Motor neuron (in vitro differentiated cells): ENCODE measurements at regions of chr7 and their contacts with region 1.

Region 1: GRCh38 chr7:27160546-27161213 is 4.2 kb upstream of the HOXA7 start:
- ATAC-seq: peak; percentile 18 to 77 (median 64)
- H3K4me3 ChIP-seq: peak overlapping the region; percentile 34 to 55 (median 41)
- H3K27ac ChIP-seq: no peak overlapping the region
- H3K4me1 ChIP-seq: peaks cover 7% of the 10 kb centered on the region in 2 donors

Region 2: DNA sequence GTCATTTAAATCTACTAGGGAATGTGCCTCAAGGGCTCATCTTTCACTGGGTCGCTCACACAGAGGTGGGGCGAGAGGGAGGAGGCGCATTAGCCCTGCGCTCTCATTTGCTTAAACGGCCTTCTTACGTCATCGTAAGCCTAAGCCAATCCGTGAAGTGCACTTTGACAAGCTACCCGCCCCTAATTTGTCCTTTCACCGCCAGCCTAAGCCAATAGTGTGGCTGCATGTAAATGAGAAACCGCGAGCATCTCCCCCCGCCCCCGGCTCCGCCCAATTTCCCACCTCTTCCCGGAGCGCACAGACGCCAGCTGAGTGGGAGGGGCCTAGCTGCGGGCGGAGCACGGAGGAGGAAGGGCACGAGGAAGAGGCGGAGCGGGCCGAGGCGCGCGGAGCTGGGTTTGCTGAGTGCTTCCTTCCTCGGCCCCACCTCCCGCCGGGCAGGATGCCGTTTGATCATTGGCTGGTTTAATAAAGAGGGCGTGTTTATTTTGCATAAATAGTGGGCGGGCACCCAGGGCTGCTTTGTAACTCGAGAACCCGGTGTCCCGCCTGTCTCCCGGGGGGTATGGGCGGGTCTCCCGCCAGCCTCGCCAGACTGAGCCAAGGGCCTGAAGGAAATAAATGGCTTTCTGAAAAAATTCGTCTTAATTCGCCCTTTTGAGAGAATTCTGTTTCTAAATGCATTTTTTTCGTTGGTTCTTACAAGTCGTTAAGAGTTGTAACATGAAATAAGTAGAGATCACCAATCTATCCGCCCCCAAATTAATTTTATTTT is 1298.2 kb before region 1 on chr7:
- in situ Hi-C with region 1: loop called in 1 of 9 experiments (anchors 25 kb)
- ATAC-seq: peak; percentile 86 to 93 (median 92)
- H3K4me3 ChIP-seq: peak overlapping the region; percentile 7 to 25 (median 14)
- H3K27ac ChIP-seq: no peak overlapping the region
- H3K4me1 ChIP-seq: peaks cover 0 to 2% of the 10 kb centered on the region in 2 donors

Region 3: GRCh38 chr7:26398756-26399501 is 761.8 kb before region 1 on chr7:
- in situ Hi-C with region 1: loop called in 1 of 9 experiments (anchors 25 kb)
- ATAC-seq: peak; percentile 36 to 70 (median 46)
- H3K4me3 ChIP-seq: peak overlapping the region; percentile 38 to 53 (median 48)
- H3K27ac ChIP-seq: peak overlapping the region; percentile 92 to 98
- H3K4me1 ChIP-seq: peaks cover 19 to 37% of the 10 kb centered on the region in 2 donors

Region 4: GRCh38 chr7:26699766-26700165 is 460.9 kb before region 1 on chr7:
- in situ Hi-C with region 1: loop called in 1 of 9 experiments (anchors 5 kb)
- ATAC-seq: no peak
- H3K4me3 ChIP-seq: no peak overlapping the region
- H3K27ac ChIP-seq: no peak overlapping the region
- H3K4me1 ChIP-seq: peaks cover 8 to 24% of the 10 kb centered on the region in 2 donors

Region 5: DNA sequence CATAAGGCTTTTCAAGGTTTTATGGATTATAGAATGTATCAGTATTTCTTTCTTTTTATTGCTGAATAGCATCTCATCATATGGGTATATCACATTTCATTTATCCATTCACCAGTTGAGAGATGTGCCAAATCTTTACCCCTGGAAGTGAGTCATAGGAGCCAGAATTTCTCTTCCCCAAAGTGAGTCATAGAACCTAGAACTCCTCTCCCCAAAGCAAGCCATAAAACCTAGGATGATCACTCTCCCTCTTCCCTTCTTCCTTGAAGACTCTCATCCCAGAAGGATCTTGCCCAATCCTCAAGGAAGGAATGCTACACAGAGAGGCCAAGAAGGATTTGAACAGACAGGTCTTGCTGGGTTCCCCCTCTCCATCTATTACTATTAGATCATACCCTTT is 281.8 kb after region 1 on chr7:
- in situ Hi-C with region 1: no loop called
- ATAC-seq: peak in 1 of 8 experiments; percentile 67
- H3K4me3 ChIP-seq: no peak overlapping the region
- H3K27ac ChIP-seq: no peak overlapping the region
- H3K4me1 ChIP-seq: no peaks in the 10 kb centered on the region